Heart right ventricle (tissue), 16 donors: ENCODE measurements at regions of chr10 and their contacts with region 1.

Region 1: DNA sequence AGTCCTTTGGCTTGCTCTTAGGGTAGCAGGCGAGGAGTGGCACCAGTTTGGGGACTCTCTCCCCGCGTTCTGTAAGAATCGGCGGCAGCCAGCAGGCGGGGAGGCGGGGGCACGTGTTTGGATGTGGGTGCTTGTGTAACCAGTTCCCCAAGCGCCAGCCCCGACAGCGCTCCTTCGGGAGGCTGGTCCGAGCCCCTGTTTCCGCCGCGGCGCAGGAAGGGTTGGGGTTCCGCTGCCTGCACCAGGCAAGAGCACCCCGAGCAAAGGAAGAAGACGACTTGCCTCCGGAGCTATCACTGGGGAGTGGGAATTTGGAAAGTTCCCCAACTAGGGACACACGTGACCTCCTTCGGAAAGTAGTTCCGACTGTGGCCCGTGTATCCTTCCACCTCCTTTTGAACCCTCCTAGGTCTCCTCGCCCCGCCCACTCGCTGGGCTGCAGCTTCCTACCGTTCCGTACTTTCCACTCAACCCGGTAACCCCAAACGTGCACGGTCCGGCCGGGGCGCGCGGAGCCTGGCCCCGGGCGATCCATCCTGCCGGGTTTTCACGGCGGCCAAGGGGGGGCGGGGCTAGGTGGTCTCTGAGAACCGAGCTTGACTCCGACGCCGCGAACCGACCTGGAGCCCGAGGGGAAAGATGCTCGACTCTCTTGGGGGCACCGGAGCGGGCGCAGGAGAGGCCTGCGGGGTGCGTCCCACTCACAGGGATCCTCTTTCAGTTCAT is 1.2 kb downstream of the KLLN start:
- DNase-seq: peak; percentile 96 to 97
- ATAC-seq: peak; percentile 86 to 95 (median 92)
- H3K4me3 ChIP-seq: peak overlapping the region; percentile 77 to 90 (median 85)
- H3K27ac ChIP-seq: peak overlapping the region; percentile 91 to 99 (median 98)
- H3K4me1 ChIP-seq: peaks cover 0 to 20% (median 16%) of the 10 kb centered on the region in 9 donors
- H3K27me3 ChIP-seq: no peaks in the 10 kb centered on the region
- CTCF ChIP-seq: peak in 2 of 9 donors; percentile 7 to 20

Region 2: DNA sequence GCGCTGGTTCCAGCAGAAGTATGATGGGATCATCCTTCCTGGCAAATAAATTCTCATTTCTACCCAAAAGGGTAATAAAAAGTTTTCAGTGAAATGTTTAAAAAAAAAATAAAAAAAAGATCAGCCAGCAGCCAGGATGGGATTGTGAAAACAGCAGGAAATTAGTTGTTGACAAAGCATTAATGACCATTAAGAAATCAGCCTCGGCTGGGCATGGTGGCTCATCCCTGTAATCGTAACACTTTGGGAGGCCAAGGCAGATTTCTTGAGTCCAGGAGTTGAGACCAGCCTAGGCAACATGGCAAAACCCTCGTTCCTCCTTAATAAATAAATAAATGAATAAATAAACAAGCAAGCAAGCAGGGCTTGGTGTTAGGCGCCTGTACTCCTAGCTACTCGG is 83.9 kb after region 1 on chr10:
- intact Hi-C with region 1: loop called in 2 of 10 experiments (anchors 5 to 10 kb)
- DNase-seq: no peak
- ATAC-seq: no peak
- H3K4me3 ChIP-seq: no peak overlapping the region
- H3K27ac ChIP-seq: no peak overlapping the region
- H3K4me1 ChIP-seq: peaks cover 0 to 48% (median 7%) of the 10 kb centered on the region in 9 donors
- H3K27me3 ChIP-seq: no peaks in the 10 kb centered on the region
- CTCF ChIP-seq: no peak

Region 3: DNA sequence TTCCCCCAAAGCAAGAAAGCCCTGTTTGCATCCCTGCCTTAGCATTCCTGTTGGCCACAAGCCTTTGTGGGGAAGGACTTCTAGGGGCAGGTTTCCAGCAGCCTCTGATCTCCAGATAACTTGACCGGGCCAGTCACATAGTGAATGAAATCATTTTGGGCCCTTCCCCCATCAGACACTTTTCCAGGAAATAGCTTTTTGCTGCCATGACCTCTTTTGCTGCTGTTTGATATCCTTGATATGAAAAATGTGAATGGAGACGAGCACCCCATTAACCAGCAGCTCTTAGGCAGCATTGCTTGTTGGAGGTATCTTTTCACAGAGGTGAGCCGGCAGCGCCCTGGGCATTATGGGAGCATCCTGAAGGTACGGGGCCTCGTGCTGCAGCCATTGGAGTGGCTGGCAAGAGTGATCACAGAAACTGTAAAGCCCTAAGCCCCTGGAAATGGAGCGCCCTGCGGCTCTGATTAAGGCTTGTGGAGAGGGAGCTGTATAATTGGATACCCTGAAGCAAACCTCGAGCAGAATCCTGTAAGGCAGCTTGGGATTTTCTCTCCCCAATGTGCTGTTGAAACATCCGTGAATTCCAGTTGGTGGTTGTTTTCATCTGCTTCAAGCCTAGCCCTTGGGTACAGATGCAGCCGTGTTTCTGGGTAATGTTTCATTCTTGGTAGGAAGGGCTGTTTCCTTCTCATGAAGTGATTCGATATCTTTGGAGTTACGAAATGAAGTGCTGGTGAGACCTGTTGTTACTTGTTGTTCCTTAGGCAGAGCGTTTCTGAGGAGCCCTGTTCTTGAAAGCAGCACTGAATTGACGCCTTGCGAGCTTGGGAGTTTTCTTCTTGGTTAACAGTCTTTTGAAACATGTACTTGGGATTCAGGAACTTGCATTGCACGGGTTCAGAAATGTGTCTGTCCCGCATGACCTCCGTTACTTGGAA is 180.3 kb after region 1 on chr10:
- intact Hi-C with region 1: loop called in 2 of 10 experiments (anchors 5 to 10 kb)
- DNase-seq: peak in 1 of 2 donors; percentile 17
- ATAC-seq: peak in 5 of 8 donors; percentile 38 to 71 (median 65)
- H3K4me3 ChIP-seq: no peak overlapping the region
- H3K27ac ChIP-seq: peak overlapping the region in 6 of 10 donors; percentile 26 to 65 (median 44)
- H3K4me1 ChIP-seq: peaks cover 3 to 71% (median 18%) of the 10 kb centered on the region in 9 donors
- H3K27me3 ChIP-seq: no peaks in the 10 kb centered on the region
- CTCF ChIP-seq: no peak

Region 4: DNA sequence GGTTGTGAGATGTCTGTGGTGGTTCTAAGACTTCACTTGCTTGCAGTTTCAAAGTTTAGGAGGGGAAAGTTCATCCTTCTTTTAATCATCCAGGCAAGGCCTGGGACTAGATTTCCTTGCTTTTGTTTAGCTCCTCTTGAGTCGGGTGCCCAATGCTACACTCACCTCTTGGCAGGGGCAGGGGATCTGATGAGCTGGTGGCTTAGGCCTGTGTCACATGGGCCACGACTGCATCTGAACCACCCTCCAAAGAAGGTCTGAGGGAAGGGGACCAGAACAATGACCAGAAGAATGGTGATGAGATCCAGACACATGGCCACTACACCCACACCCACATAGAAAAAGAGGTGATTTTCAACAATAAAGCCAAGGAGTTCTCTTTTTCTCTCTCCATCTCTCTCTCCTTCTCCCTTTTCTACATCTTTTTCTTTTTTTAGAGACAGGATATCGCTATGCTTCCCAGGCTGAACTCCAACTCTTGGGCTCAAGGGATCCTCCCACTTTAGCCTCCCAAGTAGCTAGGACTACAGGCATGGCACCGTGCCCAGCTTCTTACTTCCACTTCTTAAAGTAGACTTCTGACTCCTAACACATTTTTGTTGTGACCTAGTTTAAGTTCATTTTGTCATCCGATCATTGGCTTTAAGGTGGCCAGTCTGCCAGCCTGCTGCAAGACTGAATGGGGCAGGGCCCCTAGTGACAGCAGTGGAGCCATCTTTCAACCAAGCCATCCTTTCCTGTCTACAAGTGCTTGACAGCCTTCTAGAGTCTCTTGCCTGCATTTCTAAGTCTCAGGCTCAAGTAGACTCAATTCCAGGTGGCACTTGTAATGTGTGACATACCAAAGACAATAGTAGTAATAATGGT is 370.1 kb after region 1 on chr10:
- intact Hi-C with region 1: loop called in 2 of 10 experiments (anchors 5 kb)
- DNase-seq: peak; percentile 84
- ATAC-seq: peak; percentile 58 to 72 (median 65)
- H3K4me3 ChIP-seq: no peak overlapping the region
- H3K27ac ChIP-seq: peak overlapping the region; percentile 7 to 77 (median 68)
- H3K4me1 ChIP-seq: peaks cover 6 to 78% (median 42%) of the 10 kb centered on the region in 9 donors
- H3K27me3 ChIP-seq: no peaks in the 10 kb centered on the region
- CTCF ChIP-seq: no peak

Region 5: DNA sequence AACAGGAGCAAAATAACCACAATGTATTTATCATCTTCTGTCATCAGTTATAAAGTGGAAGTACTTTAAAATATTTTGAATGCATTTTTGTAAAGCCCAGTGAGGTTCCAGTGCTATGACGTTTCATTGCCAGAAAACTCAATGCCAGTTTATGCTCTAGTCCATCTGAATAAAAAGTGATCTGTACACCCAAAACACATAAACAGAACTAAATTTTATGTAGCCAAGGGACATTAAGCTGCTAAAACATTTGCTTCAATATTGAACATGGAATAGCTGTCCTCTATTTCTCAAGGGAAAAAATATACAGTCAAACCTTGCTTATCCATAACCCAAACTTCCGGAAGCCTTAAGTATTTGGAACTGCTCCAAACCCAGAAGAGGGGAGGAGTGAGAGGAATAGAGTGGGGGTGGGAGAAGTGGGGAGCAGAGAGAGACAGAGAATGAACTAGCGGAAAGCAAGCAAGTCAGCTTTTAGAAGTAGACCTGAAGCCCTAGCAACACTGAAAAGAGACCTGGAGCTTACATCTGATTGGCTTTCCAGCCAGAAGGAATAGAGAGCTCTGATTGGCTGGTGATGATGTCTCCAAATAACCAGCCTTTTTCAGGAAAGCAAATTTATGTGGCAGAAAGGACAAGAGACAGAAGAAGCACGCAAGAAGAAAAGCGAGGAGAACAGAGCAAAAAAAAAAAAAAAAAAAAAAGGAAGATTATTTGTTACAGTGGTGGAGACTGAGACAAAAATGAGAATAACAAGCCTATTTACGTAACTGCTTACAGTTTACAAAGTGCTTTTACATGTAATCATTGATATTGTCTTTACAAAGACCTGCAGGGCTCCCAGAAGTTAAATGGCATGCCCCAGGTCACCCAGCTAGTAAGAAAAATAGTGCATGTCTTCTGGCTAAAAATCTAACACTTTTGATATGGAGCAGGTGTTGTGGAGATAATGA is 525.0 kb after region 1 on chr10:
- intact Hi-C with region 1: loop called in 8 of 10 experiments (anchors 2 to 5 kb)
- DNase-seq: peak in 1 of 2 donors; percentile 57
- ATAC-seq: peak; percentile 82 to 93 (median 92)
- H3K4me3 ChIP-seq: peak overlapping the region in 7 of 10 donors; percentile 9 to 39 (median 31)
- H3K27ac ChIP-seq: peak overlapping the region; percentile 1 to 75 (median 56)
- H3K4me1 ChIP-seq: peaks cover 0 to 54% (median 29%) of the 10 kb centered on the region in 9 donors
- H3K27me3 ChIP-seq: no peaks in the 10 kb centered on the region
- CTCF ChIP-seq: no peak